Naive thymus-derived CD4-positive, alpha-beta T cell (primary cell): ENCODE measurements at regions of chr7 and their contacts with region 1.

Region 1: GRCh38 chr7:142811154-142811737 is 40.5 kb downstream of the PRSS2 start:
- DNase-seq: peak in 7 of 9 donors; percentile 73 to 86 (median 79)
- ATAC-seq: peak; percentile 19
- H3K4me3 ChIP-seq: no peak overlapping the region
- H3K4me3 Mint-ChIP-seq: peak overlapping the region; percentile 58 to 100 (median 76)
- H3K27ac ChIP-seq: peak overlapping the region; percentile 98
- H3K27ac Mint-ChIP-seq: peak overlapping the region; percentile 92 to 100 (median 100)
- H3K4me1 ChIP-seq: peaks cover 47 to 89% of the 10 kb centered on the region in 2 donors
- H3K4me1 Mint-ChIP-seq: peaks cover 57 to 100% (median 91%) of the 10 kb centered on the region in 7 donors
- H3K27me3 ChIP-seq: no peaks in the 10 kb centered on the region
- H3K27me3 Mint-ChIP-seq: peaks cover 0 to 6% (median 0%) of the 10 kb centered on the region in 5 donors

Region 2: DNA sequence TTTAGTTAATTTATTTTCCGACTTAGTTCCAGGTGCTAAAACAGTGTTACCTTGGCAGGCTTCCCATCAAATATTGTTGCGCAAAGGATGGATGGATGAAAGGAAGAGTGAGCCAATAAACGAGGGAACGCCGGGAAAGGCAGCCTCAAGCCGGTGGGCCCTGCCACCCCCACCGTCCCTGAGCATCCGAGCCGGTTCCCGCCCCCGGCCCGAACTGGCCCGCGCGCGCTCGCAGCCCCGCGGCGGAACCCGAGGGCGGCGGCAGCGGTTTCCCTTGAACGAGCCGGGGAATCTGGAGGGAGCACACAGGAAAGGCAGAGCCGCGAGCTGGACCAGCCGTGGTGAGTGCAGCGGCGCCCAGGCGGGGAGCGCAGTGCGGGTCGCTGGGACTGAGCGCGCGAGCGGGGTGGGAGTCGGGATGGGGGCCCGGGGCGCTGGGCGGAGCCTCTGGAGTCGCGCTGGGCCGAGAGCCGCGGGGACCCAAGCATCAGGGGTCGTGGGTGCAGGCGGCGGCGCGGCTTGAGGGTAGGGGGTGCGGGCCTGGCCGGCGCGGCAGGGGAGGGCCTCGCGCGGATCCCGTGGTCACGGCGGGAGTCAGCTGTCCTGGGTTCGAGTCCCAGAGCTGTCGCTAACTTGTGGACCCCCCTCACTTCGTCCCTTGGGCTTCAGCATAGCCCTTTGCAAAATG is 1260.0 kb before region 1 on chr7 and contains the start of gene AGK:
- CTCF ChIA-PET with region 1: no interaction called
- POLR2A ChIA-PET with region 1: no interaction called
- intact Hi-C with region 1: loop called in 1 of 2 experiments (anchors 10 kb)
- DNase-seq: peak; percentile 61 to 83 (median 74)
- ATAC-seq: peak; percentile 96
- H3K4me3 ChIP-seq: peak within 1 kb of the TSS; percentile 89
- H3K4me3 Mint-ChIP-seq: peak within 1 kb of the TSS; percentile 83 to 99 (median 92)
- H3K27ac ChIP-seq: peak within 1 kb of the TSS; percentile 73
- H3K27ac Mint-ChIP-seq: peak within 1 kb of the TSS; percentile 52 to 96 (median 90)
- H3K4me1 ChIP-seq: peaks cover 12 to 17% of the 10 kb centered on the region in 2 donors
- H3K4me1 Mint-ChIP-seq: peaks cover 14 to 44% (median 40%) of the 10 kb centered on the region in 7 donors
- H3K27me3 ChIP-seq: no peaks in the 10 kb centered on the region
- H3K27me3 Mint-ChIP-seq: peaks cover 0 to 4% (median 0%) of the 10 kb centered on the region in 5 donors
- total RNA-seq, gene AGK: 24.3 to 58.8 (median 29.9) TPM

Region 3: GRCh38 chr7:142352543-142352942 is 458.7 kb before region 1 on chr7:
- CTCF ChIA-PET with region 1: interaction called, 6 read pairs
- POLR2A ChIA-PET with region 1: interaction called, 24 read pairs
- intact Hi-C with region 1: no loop called
- DNase-seq: peak in 1 of 9 donors; percentile 17
- ATAC-seq: peak; percentile 64
- H3K4me3 ChIP-seq: peak overlapping the region; percentile 37
- H3K4me3 Mint-ChIP-seq: peak overlapping the region; percentile 38 to 85 (median 74)
- H3K27ac ChIP-seq: peak overlapping the region; percentile 64
- H3K27ac Mint-ChIP-seq: peak overlapping the region; percentile 13 to 90 (median 82)
- H3K4me1 ChIP-seq: peaks cover 3 to 23% of the 10 kb centered on the region in 2 donors
- H3K4me1 Mint-ChIP-seq: peaks cover 12 to 53% (median 42%) of the 10 kb centered on the region in 7 donors
- H3K27me3 ChIP-seq: no peaks in the 10 kb centered on the region
- H3K27me3 Mint-ChIP-seq: peaks cover 0 to 13% (median 0%) of the 10 kb centered on the region in 5 donors

Region 4: GRCh38 chr7:142445019-142445686 is 366.1 kb before region 1 on chr7:
- CTCF ChIA-PET with region 1: interaction called, 8 read pairs
- POLR2A ChIA-PET with region 1: interaction called, 18 read pairs
- intact Hi-C with region 1: loop called (anchors 1 kb)
- DNase-seq: peak in 6 of 9 donors; percentile 33 to 54 (median 40)
- ATAC-seq: peak; percentile 63
- H3K4me3 ChIP-seq: no peak overlapping the region
- H3K4me3 Mint-ChIP-seq: peak overlapping the region in 6 of 10 donors; percentile 7 to 41 (median 22)
- H3K27ac ChIP-seq: no peak overlapping the region
- H3K27ac Mint-ChIP-seq: peak overlapping the region; percentile 48 to 82 (median 71)
- H3K4me1 ChIP-seq: peaks cover 0 to 23% of the 10 kb centered on the region in 2 donors
- H3K4me1 Mint-ChIP-seq: peaks cover 17 to 40% (median 35%) of the 10 kb centered on the region in 7 donors
- H3K27me3 ChIP-seq: no peaks in the 10 kb centered on the region
- H3K27me3 Mint-ChIP-seq: peaks cover 0 to 5% (median 0%) of the 10 kb centered on the region in 5 donors

Region 5: DNA sequence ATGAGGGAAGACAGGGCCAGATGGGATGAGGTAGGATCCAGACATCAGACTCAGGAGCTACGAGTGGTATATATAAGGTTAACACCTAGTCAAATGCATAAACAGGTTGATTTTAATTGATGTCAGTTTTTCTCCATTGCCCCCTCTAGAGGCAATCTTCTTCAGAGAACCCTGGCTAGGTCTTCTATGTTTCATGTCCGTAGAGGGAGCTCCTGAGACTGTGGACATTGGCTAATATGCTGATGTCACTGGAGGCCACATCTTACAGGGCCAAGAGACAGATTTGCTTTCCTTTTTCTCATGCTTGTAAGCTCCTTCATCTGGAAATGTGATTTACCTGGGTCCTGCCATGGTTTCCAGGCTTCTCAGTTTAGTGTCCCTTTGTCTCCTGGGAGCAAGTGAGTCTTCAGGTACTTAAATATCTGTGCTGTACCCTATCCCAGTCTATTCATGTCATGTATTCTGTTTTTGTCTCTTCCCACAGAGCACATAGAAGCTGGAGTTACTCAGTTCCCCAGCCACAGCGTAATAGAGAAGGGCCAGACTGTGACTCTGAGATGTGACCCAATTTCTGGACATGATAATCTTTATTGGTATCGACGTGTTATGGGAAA is 223.6 kb before region 1 on chr7:
- CTCF ChIA-PET with region 1: no interaction called
- POLR2A ChIA-PET with region 1: interaction called, 6 read pairs
- intact Hi-C with region 1: loop called in 1 of 2 experiments (anchors 1 kb)
- DNase-seq: peak in 7 of 9 donors; percentile 18 to 53 (median 34)
- ATAC-seq: peak; percentile 91
- H3K4me3 ChIP-seq: no peak overlapping the region
- H3K4me3 Mint-ChIP-seq: peak overlapping the region in 4 of 10 donors; percentile 5 to 56 (median 24)
- H3K27ac ChIP-seq: no peak overlapping the region
- H3K27ac Mint-ChIP-seq: peak overlapping the region in 4 of 9 donors; percentile 12 to 66 (median 42)
- H3K4me1 ChIP-seq: no peaks in the 10 kb centered on the region
- H3K4me1 Mint-ChIP-seq: peaks cover 0 to 16% (median 5%) of the 10 kb centered on the region in 7 donors
- H3K27me3 ChIP-seq: no peaks in the 10 kb centered on the region
- H3K27me3 Mint-ChIP-seq: no peaks in the 10 kb centered on the region

Region 6: GRCh38 chr7:142711746-142712619 is 99.3 kb before region 1 on chr7:
- CTCF ChIA-PET with region 1: interaction called, 31 read pairs
- POLR2A ChIA-PET with region 1: interaction called, 149 read pairs
- intact Hi-C with region 1: loop called (anchors 1 to 2 kb)
- DNase-seq: no peak
- ATAC-seq: peak; percentile 75
- H3K4me3 ChIP-seq: peak overlapping the region; percentile 46
- H3K4me3 Mint-ChIP-seq: peak overlapping the region; percentile 76 to 94 (median 88)
- H3K27ac ChIP-seq: peak overlapping the region; percentile 62
- H3K27ac Mint-ChIP-seq: peak overlapping the region; percentile 81 to 96 (median 91)
- H3K4me1 ChIP-seq: peaks cover 31 to 50% of the 10 kb centered on the region in 2 donors
- H3K4me1 Mint-ChIP-seq: peaks cover 20 to 76% (median 63%) of the 10 kb centered on the region in 7 donors
- H3K27me3 ChIP-seq: no peaks in the 10 kb centered on the region
- H3K27me3 Mint-ChIP-seq: peaks cover 0 to 1% (median 0%) of the 10 kb centered on the region in 5 donors

Region 7: GRCh38 chr7:143008007-143008901 is 197.0 kb after region 1 on chr7:
- CTCF ChIA-PET with region 1: interaction called, 12 read pairs
- POLR2A ChIA-PET with region 1: interaction called, 4 read pairs
- intact Hi-C with region 1: loop called (anchors 2 to 5 kb)
- DNase-seq: peak; percentile 57 to 85 (median 75)
- ATAC-seq: peak; percentile 98
- H3K4me3 ChIP-seq: no peak overlapping the region
- H3K4me3 Mint-ChIP-seq: no peak overlapping the region
- H3K27ac ChIP-seq: no peak overlapping the region
- H3K27ac Mint-ChIP-seq: peak overlapping the region in 1 of 9 donors; percentile 56
- H3K4me1 ChIP-seq: no peaks in the 10 kb centered on the region
- H3K4me1 Mint-ChIP-seq: peaks cover 3 to 8% (median 5%) of the 10 kb centered on the region in 7 donors
- H3K27me3 ChIP-seq: no peaks in the 10 kb centered on the region
- H3K27me3 Mint-ChIP-seq: peaks cover 0 to 24% (median 4%) of the 10 kb centered on the region in 5 donors